ENCODE measurements at regions of chr14 and their contacts with region 1.

Region 1: DNA sequence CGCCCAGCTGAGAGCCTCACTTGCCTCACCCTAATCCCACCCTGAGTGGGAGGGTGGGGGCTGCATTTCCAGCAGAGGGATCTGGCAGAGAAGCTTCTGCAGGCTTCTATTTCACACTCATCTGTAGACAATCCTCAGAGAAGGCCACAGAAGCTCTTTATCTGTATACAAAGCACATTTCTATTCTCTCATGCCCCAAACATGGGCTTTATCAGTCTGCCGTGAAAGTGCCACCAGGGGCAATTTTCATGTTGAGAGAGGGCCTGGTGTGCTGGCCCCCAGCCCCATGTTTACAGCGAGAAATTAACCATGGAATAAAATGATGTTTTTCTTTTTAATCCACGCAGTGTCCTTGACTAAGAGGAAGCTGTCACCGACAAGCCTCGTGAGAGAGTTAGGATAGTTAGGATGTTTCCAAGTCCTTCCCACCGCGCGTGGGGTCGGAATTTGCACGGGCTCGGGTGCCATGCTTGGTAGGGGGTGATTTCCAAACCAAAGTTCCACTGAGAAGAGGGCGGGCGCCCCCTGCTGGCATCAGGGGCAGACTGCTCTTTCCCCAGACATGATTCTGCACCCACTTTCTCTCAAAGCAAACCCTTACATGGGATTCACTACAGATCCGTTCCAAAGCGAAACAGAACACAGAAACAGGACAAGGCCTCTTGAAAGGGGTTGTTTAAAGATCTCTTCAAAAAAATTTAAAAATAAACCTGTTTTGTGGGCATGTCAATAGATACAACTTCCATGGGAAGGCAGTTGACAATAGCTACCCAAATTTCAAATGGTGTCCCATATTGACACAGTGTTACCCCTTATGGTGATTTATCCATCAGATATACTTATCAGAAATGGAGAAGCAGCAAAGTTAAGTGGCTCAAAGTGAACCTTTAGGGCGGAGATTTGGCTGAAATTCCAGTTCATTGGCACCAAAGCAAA is 19.4 kb downstream of the BDKRB1 start:
- DNase-seq: peak; percentile 86
- ATAC-seq: peak; percentile 47
- H3K4me3 Mint-ChIP-seq: no peak overlapping the region
- H3K27ac Mint-ChIP-seq: no peak overlapping the region
- H3K4me1 Mint-ChIP-seq: no peaks in the 10 kb centered on the region
- H3K27me3 Mint-ChIP-seq: no peaks in the 10 kb centered on the region

Region 2: DNA sequence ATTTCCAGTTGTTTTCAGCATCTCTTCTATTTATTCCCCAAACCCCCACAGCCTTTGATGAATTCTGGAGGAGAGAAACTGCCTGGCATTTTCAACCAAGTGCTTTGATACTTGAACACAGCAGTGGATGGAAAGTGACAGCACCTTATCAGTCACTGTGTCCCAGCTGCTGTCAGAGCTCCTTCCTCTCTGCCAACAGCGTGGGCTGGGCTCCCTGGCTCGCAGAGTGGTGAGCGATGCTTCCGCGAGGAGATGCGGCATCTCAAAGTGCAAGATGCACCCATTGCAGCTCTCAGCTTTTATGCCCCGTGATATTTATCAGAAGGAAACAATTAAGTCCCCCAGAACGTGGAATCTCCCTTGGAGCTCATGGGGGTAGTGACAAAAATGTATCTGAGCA is 488.9 kb before region 1 on chr14:
- CTCF ChIA-PET with region 1: no interaction called
- POLR2A ChIA-PET with region 1: no interaction called
- intact Hi-C with region 1: no loop called
- DNase-seq: no peak
- ATAC-seq: no peak
- H3K4me3 Mint-ChIP-seq: no peak overlapping the region
- H3K27ac Mint-ChIP-seq: no peak overlapping the region
- H3K4me1 Mint-ChIP-seq: no peaks in the 10 kb centered on the region
- H3K27me3 Mint-ChIP-seq: peaks cover 13% of the 10 kb centered on the region

Region 3: DNA sequence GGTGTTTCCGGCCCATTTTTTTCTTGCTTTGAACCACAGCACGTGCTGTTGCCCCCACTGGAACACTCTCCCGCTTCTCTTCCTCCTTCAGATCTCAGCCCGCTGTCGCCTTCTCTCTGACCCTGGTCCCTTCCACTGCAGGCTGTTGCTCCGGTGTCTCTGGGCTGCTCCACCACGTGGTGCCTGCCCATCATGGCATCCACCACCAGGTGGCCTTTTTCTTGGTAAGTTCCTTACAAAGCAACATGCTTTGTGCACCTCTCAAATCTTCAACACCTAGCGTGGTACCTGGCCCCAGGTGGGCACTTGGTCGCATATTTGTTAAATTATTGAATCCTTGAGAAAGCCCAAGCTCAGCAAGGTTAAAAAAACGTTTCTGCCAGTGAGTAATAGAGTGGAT is 379.7 kb before region 1 on chr14:
- CTCF ChIA-PET with region 1: no interaction called
- POLR2A ChIA-PET with region 1: no interaction called
- intact Hi-C with region 1: loop called in 1 of 2 experiments (anchors 10 kb)
- DNase-seq: peak; percentile 53
- ATAC-seq: no peak
- H3K4me3 Mint-ChIP-seq: no peak overlapping the region
- H3K27ac Mint-ChIP-seq: no peak overlapping the region
- H3K4me1 Mint-ChIP-seq: no peaks in the 10 kb centered on the region
- H3K27me3 Mint-ChIP-seq: peaks cover 13% of the 10 kb centered on the region

Region 4: GRCh38 chr14:96056509-96057422 is 218.7 kb before region 1 on chr14:
- CTCF ChIA-PET with region 1: no interaction called
- POLR2A ChIA-PET with region 1: no interaction called
- intact Hi-C with region 1: loop called in 1 of 2 experiments (anchors 1 kb)
- DNase-seq: peak; percentile 18
- ATAC-seq: no peak
- H3K4me3 Mint-ChIP-seq: no peak overlapping the region
- H3K27ac Mint-ChIP-seq: no peak overlapping the region
- H3K4me1 Mint-ChIP-seq: no peaks in the 10 kb centered on the region
- H3K27me3 Mint-ChIP-seq: peaks cover 11% of the 10 kb centered on the region

Region 5: GRCh38 chr14:96100161-96101029 is 175.1 kb before region 1 on chr14:
- CTCF ChIA-PET with region 1: interaction called, 94 read pairs
- POLR2A ChIA-PET with region 1: no interaction called
- intact Hi-C with region 1: loop called (anchors 1 kb)
- DNase-seq: peak; percentile 84
- ATAC-seq: peak; percentile 66
- H3K4me3 Mint-ChIP-seq: no peak overlapping the region
- H3K27ac Mint-ChIP-seq: no peak overlapping the region
- H3K4me1 Mint-ChIP-seq: no peaks in the 10 kb centered on the region
- H3K27me3 Mint-ChIP-seq: no peaks in the 10 kb centered on the region

Region 6: DNA sequence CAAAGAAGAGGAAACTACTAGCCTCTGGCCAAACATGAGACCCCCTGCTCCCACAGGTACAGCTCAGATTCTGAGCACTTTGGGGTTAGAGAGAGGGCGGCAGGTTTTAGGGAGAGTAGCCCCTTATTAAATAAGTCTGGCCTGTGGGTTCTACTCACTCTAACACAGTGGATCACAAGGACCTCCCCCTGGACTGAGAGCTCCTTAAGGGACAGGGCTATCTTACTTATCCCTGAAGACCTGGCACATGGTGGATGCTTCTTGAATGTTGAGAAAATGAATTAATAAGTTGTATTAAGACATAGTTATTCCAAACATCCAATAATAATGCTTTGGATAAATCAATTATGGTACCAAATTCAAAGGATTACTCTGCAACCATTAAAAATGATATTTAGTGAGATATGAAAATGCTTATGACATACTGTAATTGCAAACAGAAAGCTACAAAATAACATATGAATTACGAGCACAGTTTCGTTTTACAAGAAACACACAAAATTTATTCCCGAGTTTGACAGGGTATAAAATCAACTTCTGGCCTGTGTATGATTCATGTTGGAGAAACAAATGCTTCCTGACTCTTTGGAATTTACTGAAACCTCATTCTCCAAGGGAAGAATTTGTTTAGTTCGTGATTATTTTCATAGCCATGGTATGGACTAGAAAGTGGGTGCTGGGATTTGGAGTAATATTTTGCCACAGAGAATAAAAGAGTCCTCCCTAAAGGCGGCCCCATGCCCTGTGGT is 130.2 kb before region 1 on chr14:
- CTCF ChIA-PET with region 1: no interaction called
- POLR2A ChIA-PET with region 1: no interaction called
- intact Hi-C with region 1: no loop called
- DNase-seq: no peak
- ATAC-seq: no peak
- H3K4me3 Mint-ChIP-seq: no peak overlapping the region
- H3K27ac Mint-ChIP-seq: no peak overlapping the region
- H3K4me1 Mint-ChIP-seq: no peaks in the 10 kb centered on the region
- H3K27me3 Mint-ChIP-seq: peaks cover 3% of the 10 kb centered on the region

Region 7: GRCh38 chr14:96297000-96297399 is 21.6 kb after region 1 on chr14:
- CTCF ChIA-PET with region 1: interaction called, 17 read pairs
- POLR2A ChIA-PET with region 1: interaction called, 3 read pairs
- intact Hi-C with region 1: no loop called
- DNase-seq: no peak
- ATAC-seq: no peak
- H3K4me3 Mint-ChIP-seq: no peak overlapping the region
- H3K27ac Mint-ChIP-seq: no peak overlapping the region
- H3K4me1 Mint-ChIP-seq: no peaks in the 10 kb centered on the region
- H3K27me3 Mint-ChIP-seq: no peaks in the 10 kb centered on the region

Region 8: DNA sequence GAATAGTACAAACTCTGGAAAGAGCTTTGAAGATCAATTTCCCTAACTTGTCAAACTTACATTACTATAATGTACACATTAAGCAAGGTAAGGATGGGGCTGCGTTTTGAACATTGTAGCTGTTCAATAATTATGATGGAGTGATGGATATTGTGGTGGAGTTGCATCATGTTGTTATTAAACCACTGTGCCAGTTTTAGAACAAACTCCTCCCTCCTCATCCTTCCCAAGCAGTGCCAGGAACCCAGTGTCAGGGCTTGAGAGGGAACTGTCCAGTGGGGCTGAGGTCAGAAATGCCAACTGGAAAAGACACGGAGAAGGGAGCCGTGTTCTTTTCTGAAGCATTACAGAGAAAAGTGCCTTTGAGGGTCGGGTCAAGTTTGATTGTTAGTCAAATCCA is 194.9 kb after region 1 on chr14:
- CTCF ChIA-PET with region 1: no interaction called
- POLR2A ChIA-PET with region 1: no interaction called
- intact Hi-C with region 1: no loop called
- DNase-seq: no peak
- ATAC-seq: no peak
- H3K4me3 Mint-ChIP-seq: no peak overlapping the region
- H3K27ac Mint-ChIP-seq: no peak overlapping the region
- H3K4me1 Mint-ChIP-seq: no peaks in the 10 kb centered on the region
- H3K27me3 Mint-ChIP-seq: peaks cover 4% of the 10 kb centered on the region